SK-N-SH (cell line): ENCODE measurements at regions of chr9 and their contacts with region 1.

Region 1: DNA sequence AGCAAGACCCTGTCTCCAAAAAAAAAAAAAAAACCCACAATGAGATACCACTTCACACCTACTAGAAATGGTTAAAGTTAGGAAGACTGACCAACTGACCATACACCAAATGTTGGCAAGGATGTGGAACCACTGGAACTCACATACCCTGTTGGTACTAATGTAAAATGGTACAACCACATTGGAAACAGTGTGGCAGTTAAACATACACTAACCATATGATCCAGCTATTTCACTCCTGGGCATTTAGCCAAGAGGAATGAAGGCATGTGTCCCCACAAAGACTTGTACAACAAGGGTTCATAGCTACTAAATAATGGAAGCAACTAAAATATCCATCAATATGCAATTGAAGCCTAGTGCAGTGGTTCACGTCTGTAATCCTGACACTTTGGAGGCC is 21.3 kb downstream of the NAIF1 start:
- DNase-seq: peak; percentile 39
- H3K4me3 ChIP-seq: no peak overlapping the region
- H3K27ac ChIP-seq: peak overlapping the region; percentile 28 to 79; a peak in 3 of 4 replicates
- H3K4me1 ChIP-seq: peaks cover 5 to 19% of the 10 kb centered on the region in 2 experiments; a peak in 3 of 4 replicates
- H3K27me3 ChIP-seq: no peaks in the 10 kb centered on the region
- CTCF ChIP-seq: no peak
- EP300 ChIP-seq: no peak; a peak in 1 of 4 replicates
- RAD21 ChIP-seq: no peak

Region 2: DNA sequence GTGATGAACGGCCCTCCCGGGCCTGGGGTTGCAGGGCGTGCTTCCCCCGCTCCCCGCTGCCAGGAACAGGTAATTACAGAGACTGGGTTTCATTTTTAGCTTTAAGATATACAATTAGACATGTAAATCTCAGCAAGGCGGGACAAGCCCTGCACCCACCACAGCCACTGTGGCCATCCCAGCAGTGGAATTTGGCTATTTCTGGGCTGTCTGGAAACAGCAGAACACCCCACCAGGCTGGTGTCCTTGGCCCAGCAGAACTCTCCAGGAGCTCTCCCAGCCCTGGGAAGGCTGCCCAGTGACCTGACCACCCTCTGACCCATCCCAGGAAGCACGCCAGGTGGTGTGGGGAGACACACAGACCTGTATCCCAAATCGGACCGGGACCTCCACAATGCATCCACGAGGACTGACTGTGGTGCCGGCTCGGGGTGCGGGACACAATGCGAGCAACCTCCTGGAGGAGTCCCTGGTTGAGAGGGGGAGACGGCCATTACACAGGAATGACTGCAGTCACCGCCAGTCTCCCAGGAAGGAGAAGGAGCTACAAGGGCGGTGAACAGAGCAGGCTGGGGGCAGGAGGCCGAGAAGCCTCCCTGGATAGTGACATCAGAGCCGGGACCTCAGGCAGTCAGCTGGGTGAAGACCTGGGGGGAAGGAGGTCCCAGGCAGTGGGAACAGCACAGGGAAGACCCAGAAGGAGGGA is 82.3 kb before region 1 on chr9:
- CTCF ChIA-PET with region 1: interaction called, 11 read pairs
- POLR2A ChIA-PET with region 1: no interaction called
- DNase-seq: no peak
- H3K4me3 ChIP-seq: no peak overlapping the region
- H3K27ac ChIP-seq: peak overlapping the region in 1 of 2 experiments; percentile 72; a peak in 3 of 4 replicates
- H3K4me1 ChIP-seq: peaks cover 56 to 80% of the 10 kb centered on the region in 2 experiments
- H3K27me3 ChIP-seq: no peaks in the 10 kb centered on the region
- CTCF ChIP-seq: no peak
- EP300 ChIP-seq: no peak
- RAD21 ChIP-seq: no peak

Region 3: DNA sequence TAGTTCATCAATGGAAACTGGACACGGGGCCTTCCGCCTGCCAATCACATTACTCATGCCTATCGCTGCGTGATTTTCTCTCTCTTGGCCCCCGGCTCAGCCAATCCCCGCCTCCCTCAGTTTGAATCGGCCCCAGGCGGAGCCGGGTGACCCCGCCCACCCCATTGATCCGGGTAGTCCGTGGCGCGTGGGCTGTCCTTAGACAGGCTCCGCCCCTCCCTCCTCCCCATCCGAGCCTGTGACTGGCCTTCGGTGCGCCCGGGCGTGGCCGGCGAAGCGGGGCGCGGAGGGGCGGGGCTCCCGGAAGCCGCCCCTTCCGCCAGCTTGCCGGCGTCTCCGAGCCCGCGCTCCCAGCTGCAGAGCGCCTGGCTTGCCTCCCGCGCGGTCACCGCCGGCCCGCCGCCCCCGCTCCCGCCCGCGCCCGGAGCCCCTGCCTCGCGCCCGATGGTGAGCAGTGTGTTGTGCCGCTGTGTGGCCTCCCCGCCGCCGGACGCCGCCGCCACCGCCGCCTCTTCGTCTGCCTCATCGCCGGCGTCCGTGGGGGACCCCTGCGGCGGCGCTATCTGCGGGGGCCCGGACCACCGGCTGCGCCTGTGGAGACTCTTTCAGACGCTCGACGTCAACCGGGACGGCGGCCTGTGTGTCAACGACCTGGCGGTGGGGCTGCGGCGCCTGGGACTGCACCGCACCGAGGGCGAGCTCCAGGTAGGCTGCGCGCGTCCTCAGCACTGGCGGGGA is 22.2 kb after region 1 on chr9 and contains the start of gene SLC25A25:
- CTCF ChIA-PET with region 1: interaction called, 4 read pairs
- POLR2A ChIA-PET with region 1: interaction called, 10 read pairs
- DNase-seq: peak; percentile 99
- H3K4me3 ChIP-seq: peak within 1 kb of the TSS; percentile 81 to 84
- H3K27ac ChIP-seq: peak within 1 kb of the TSS; percentile 99
- H3K4me1 ChIP-seq: peaks cover 22 to 27% of the 10 kb centered on the region in 2 experiments
- H3K27me3 ChIP-seq: no peaks in the 10 kb centered on the region
- CTCF ChIP-seq: no peak
- EP300 ChIP-seq: no peak
- RAD21 ChIP-seq: no peak
- polyA plus RNA-seq, gene SLC25A25: 12.1 and 12.3 TPM in 2 replicates